Mammary epithelial cell (primary cell): ENCODE measurements at regions of chr15 and their contacts with region 1.

Region 1: DNA sequence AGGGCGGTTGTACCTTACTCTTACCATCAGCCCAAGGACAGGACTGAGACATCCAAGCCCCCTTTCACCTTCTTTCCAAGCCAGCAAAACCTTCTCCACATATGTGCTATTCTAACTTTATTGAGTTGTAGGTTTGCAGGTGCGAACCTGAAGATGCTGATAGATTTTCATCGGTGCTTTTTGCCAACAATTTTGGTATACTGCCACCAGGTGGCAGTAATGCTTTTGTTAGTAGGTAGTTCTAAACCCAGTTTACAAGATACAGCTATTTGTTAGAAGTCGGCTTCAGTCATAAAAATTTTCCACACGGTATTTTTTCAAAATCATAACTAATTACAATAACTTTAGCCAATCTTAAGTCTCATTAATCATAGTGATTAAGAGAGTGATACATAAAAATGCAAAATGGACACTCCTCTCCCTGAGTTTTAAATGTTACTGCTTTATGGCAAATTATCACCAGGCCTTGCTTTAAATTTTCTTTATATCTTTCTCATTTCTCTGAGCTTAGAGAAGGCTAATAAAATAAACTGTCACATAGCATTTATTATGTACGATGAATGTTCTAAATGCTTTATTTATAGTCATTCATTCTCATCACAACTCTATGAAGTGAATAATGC is 636 bp downstream of the TBC1D21 start:
- DNase-seq: peak; percentile 25
- H3K4me3 ChIP-seq: no peak overlapping the region
- H3K27ac ChIP-seq: no peak overlapping the region
- H3K4me1 ChIP-seq: no peaks in the 10 kb centered on the region
- H3K27me3 ChIP-seq: peaks cover 3% of the 10 kb centered on the region
- CTCF ChIP-seq: peak; percentile 65 to 66

Region 2: DNA sequence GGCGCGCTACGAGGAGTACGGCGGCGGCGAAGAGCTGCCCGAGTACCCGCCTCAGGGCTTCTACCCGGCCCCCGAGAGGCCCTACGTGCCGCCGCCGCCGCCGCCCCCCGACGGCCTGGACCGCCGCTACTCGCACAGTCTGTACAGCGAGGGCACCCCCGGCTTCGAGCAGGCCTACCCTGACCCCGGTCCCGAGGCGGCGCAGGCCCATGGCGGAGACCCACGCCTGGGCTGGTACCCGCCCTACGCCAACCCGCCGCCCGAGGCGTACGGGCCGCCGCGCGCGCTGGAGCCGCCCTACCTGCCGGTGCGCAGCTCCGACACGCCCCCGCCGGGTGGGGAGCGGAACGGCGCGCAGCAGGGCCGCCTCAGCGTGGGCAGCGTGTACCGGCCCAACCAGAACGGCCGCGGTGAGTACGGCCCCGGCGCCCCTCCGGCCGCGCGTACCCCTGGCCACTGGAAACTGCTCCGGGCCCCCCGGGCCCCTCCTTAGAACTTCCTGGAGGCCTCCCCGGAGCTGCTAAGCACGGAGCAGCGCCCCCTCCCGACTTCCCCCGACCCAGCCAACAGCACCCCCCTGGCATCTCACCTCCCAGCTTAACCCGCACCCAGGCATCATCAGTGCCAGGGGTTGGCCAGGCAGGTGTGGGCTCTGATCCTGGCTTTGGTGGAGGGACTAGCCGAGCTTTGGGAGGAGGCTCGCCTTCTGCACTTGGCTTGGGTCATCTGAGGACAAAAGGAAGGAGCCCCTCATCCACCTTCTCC is 53.7 kb after region 1 on chr15:
- CTCF ChIA-PET with region 1: no interaction called
- dilution Hi-C with region 1: no loop called
- in situ Hi-C with region 1: no loop called
- intact Hi-C with region 1: loop called (anchors 5 kb)
- DNase-seq: peak; percentile 62
- H3K4me3 ChIP-seq: peak overlapping the region; percentile 37 to 60 (median 58)
- H3K27ac ChIP-seq: no peak overlapping the region
- H3K4me1 ChIP-seq: peaks cover 53% of the 10 kb centered on the region
- H3K27me3 ChIP-seq: no peaks in the 10 kb centered on the region
- CTCF ChIP-seq: peak; percentile 5 to 62

Region 3: GRCh38 chr15:73956739-73957051 is 82.7 kb after region 1 on chr15:
- CTCF ChIA-PET with region 1: no interaction called
- dilution Hi-C with region 1: no loop called
- in situ Hi-C with region 1: no loop called
- intact Hi-C with region 1: no loop called
- DNase-seq: peak; percentile 97
- H3K4me3 ChIP-seq: no peak overlapping the region
- H3K27ac ChIP-seq: peak overlapping the region; percentile 80
- H3K4me1 ChIP-seq: peaks cover 41% of the 10 kb centered on the region
- H3K27me3 ChIP-seq: no peaks in the 10 kb centered on the region
- CTCF ChIP-seq: no peak